PC-9 (cell line): ENCODE measurements at regions of chr15 and their contacts with region 1.

Region 1: DNA sequence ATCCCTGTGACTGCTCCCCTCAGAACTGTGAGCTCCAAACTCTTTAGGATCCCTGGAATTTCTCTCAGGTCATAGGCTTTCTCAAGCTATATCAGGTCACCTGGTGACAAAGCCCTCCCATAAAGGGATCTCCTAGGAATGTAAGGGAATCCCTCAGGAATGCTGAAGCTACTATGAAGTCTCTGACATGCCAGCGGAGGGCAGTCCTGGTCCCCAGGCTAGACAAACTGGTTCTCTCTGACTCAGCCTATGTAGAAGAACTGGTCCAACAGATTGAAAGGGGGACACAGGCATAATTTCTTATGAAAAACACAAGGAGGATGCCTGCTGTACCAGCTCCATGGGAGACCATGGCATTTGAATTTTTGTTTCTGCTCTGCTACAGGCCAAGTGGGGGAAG is 6.7 kb downstream of the LPCAT4 start:
- DNase-seq: peak; percentile 82 to 94
- H3K4me3 ChIP-seq: no peak overlapping the region
- H3K27ac ChIP-seq: no peak overlapping the region
- H3K4me1 ChIP-seq: peaks cover 49% of the 10 kb centered on the region
- H3K27me3 ChIP-seq: no peaks in the 10 kb centered on the region
- CTCF ChIP-seq: no peak

Region 2: DNA sequence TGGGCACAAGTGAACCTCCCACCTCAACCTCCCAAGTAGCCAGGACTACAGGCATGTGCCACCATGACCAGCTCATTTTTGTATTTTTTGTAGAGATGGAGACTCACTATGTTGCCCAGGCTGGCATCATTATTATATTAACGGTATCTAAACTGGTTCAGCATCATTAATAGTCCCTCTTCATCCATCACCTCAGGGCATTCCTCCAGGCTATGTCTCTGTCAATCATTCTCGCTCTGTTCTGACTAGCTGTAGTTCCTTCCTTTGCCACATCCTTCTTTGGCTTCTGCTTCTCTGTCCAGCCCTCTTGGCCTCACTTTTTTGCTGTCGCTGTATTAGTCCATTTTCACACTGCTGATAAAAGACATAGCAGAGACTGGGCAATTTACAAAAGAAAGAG is 1108.9 kb before region 1 on chr15:
- CTCF ChIA-PET with region 1: no interaction called
- POLR2A ChIA-PET with region 1: no interaction called
- intact Hi-C with region 1: no loop called
- DNase-seq: no peak
- H3K4me3 ChIP-seq: no peak overlapping the region
- H3K27ac ChIP-seq: no peak overlapping the region
- H3K4me1 ChIP-seq: no peaks in the 10 kb centered on the region
- H3K27me3 ChIP-seq: no peaks in the 10 kb centered on the region
- CTCF ChIP-seq: no peak

Region 3: GRCh38 chr15:34337557-34338306 is 22.6 kb before region 1 on chr15 and contains the start of gene SLC12A6:
- CTCF ChIA-PET with region 1: interaction called, 3 read pairs
- POLR2A ChIA-PET with region 1: interaction called, 11 read pairs
- intact Hi-C with region 1: no loop called
- DNase-seq: peak; percentile 68 to 90
- H3K4me3 ChIP-seq: peak within 1 kb of the TSS; percentile 86
- H3K27ac ChIP-seq: peak within 1 kb of the TSS; percentile 89
- H3K4me1 ChIP-seq: peaks cover 41% of the 10 kb centered on the region
- H3K27me3 ChIP-seq: no peaks in the 10 kb centered on the region
- CTCF ChIP-seq: no peak
- total RNA-seq, gene SLC12A6: 27.5 and 28.3 TPM in 2 replicates

Region 4: DNA sequence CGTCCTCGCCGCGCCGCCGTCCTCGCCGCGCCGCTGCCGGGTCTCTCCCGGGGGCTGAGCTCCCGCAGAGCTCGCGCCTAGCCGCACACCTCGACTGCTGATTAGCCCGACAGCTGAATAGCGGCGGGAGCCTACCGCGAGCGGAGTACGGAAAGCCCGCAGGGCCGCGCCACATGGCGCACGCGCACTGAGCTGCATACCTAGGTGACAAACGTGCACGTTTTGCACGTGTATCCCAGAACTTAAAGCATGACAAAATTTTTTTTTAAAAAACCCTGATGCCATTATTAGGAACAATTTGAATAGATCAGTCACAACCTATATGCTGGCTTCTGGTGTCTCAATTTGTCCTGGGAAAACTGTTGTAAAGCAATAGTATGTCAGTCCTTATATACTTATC is 77.4 kb after region 1 on chr15 and contains the start of gene GOLGA8A:
- CTCF ChIA-PET with region 1: no interaction called
- POLR2A ChIA-PET with region 1: no interaction called
- intact Hi-C with region 1: no loop called
- DNase-seq: peak; percentile 54 to 65
- H3K4me3 ChIP-seq: peak within 1 kb of the TSS; percentile 62
- H3K27ac ChIP-seq: no peak within 1 kb of the TSS
- H3K4me1 ChIP-seq: peaks cover 17% of the 10 kb centered on the region
- H3K27me3 ChIP-seq: no peaks in the 10 kb centered on the region
- CTCF ChIP-seq: no peak
- total RNA-seq, gene GOLGA8A: 50.7 and 60.7 TPM in 2 replicates